ENCODE measurements at regions of chr17 and their contacts with region 1.

Region 1: DNA sequence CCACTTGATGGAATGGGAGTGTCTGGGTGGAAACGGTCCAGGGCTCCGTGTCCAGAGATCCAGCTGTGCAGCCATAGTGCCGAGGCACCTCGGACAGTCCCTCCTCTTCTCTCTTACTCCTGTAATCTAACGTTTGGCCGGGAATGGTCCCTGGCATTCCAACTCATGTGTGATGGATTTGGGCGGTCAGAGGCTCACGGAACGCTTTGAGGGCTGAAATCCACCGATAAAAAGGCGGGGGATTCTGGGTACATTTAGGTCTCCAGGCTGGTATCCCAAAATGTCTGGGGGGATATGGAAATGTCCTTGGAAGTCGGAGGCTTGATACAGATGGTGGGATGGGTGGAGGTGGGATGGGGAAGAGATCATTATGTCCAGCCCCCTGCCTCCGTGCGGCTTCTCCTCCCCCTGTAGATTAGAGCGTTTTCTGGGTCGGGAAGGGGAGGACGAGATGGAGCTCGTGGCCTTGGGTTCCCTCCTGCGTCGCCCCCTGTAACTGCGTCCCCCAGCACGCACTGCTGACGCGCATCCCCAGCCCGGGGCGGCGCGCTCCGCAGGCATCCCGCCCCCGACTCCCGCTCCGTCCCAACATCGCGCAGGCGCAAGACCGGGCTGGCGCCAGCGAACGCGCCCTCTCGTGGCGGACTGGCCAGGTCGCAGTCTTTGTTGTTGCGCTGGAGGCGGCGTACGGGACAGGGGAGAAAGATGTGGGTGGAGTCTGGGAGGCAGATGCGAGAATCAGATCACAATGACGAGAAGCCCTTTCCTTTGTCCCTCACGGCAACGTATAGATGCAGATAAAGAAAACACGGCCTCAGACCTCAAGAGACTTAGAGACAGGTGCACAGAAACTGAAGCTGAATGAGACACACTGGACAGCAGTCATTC is 4.5 kb upstream of the SGCA start:
- DNase-seq: peak; percentile 94 to 98
- ATAC-seq: peak; percentile 95
- H3K4me3 ChIP-seq: peak overlapping the region; percentile 57 to 71
- H3K27ac ChIP-seq: peak overlapping the region in 1 of 2 donors; percentile 74
- H3K4me1 ChIP-seq: no peaks in the 10 kb centered on the region
- H3K27me3 ChIP-seq: no peaks in the 10 kb centered on the region

Region 2: DNA sequence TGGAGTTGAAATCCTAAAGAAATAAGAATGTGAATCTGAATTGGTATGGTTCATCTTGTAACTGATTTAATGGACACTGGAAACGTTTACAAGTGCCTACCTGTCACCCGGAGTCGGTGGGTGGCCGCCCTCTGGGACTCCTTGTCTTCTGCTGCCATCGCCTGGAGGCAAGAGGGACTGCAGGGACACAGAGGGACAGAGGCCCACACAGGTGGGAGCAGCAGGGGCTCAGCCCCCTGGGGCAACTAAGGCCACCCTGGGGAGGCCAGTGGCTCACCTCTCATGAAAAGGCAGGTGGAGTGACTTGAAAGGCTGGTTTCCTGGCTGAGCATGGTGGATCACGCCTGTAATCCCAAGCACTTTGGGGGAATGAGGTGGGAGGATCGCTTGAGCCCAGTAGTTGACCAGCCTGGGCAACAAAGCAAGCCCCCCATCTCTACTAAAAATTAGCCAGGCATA is 136.2 kb after region 1 on chr17:
- intact Hi-C with region 1: loop called (anchors 10 kb)
- DNase-seq: peak; percentile 80 to 92
- ATAC-seq: peak; percentile 91
- H3K4me3 ChIP-seq: no peak overlapping the region
- H3K27ac ChIP-seq: no peak overlapping the region
- H3K4me1 ChIP-seq: no peaks in the 10 kb centered on the region
- H3K27me3 ChIP-seq: no peaks in the 10 kb centered on the region

Measured in aorta (tissue), 5 donors.